ENCODE measurements at regions of chr11 and their contacts with region 1.

Region 1: DNA sequence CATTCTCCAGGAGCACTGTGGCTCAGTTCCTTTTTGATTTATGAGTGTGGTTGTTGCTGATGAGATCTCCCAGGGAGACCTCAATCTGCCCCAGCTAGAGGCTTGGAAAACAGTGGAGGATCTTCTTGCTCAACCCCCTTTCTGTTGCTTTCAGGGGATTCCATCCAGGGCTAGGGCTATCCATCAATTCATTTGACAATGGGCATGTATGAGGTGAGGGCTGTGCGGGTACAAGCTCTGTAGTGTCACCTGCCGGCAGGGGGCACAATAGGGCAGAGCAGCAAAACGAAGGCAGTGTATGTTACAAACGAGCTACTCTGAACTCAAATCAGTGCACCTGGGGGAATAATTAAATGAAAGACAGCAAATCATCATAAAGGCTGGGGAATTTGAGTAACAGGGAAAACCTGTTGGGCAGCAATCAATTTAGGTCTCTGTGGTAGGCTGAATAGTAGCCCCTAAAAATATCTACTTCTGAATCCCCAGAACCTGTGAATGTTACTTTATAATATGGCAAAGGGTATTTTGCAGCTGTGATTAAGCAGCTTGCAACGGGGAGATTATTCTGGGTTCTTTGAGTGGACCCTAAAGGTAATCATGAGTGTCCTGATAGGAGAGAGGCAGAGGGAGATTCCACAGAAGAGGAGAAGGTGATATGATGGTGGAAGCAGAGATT is 170.3 kb upstream of the ZBED5 start:
- DNase-seq: peak; percentile 60 to 76 (median 65)
- H3K4me3 ChIP-seq: no peak overlapping the region
- H3K4me3 Mint-ChIP-seq: no peak overlapping the region
- H3K27ac ChIP-seq: no peak overlapping the region
- H3K27ac Mint-ChIP-seq: no peak overlapping the region
- H3K4me1 ChIP-seq: no peaks in the 10 kb centered on the region
- H3K4me1 Mint-ChIP-seq: peaks cover 0 to 2% (median 0%) of the 10 kb centered on the region in 4 donors
- H3K27me3 ChIP-seq: no peaks in the 10 kb centered on the region
- H3K27me3 Mint-ChIP-seq: peaks cover 0 to 2% of the 10 kb centered on the region in 2 donors

Region 2: GRCh38 chr11:10502770-10503169 is 525.4 kb before region 1 on chr11:
- CTCF ChIA-PET with region 1: no interaction called
- POLR2A ChIA-PET with region 1: no interaction called
- intact Hi-C with region 1: no loop called
- DNase-seq: no peak
- H3K4me3 ChIP-seq: no peak overlapping the region
- H3K4me3 Mint-ChIP-seq: no peak overlapping the region
- H3K27ac ChIP-seq: no peak overlapping the region
- H3K27ac Mint-ChIP-seq: peak overlapping the region in 4 of 7 donors; percentile 5 to 79 (median 32)
- H3K4me1 ChIP-seq: no peaks in the 10 kb centered on the region
- H3K4me1 Mint-ChIP-seq: peaks cover 0 to 3% (median under 1%) of the 10 kb centered on the region in 4 donors
- H3K27me3 ChIP-seq: no peaks in the 10 kb centered on the region
- H3K27me3 Mint-ChIP-seq: no peaks in the 10 kb centered on the region

Region 3: GRCh38 chr11:10920205-10920604 is 108.0 kb before region 1 on chr11:
- CTCF ChIA-PET with region 1: interaction called, 10 read pairs
- POLR2A ChIA-PET with region 1: no interaction called
- intact Hi-C with region 1: no loop called
- DNase-seq: no peak
- H3K4me3 ChIP-seq: no peak overlapping the region
- H3K4me3 Mint-ChIP-seq: no peak overlapping the region
- H3K27ac ChIP-seq: no peak overlapping the region
- H3K27ac Mint-ChIP-seq: no peak overlapping the region
- H3K4me1 ChIP-seq: no peaks in the 10 kb centered on the region
- H3K4me1 Mint-ChIP-seq: no peaks in the 10 kb centered on the region
- H3K27me3 ChIP-seq: no peaks in the 10 kb centered on the region
- H3K27me3 Mint-ChIP-seq: peaks cover 0 to 4% of the 10 kb centered on the region in 2 donors

Region 4: GRCh38 chr11:11016068-11016467 is 12.1 kb before region 1 on chr11:
- CTCF ChIA-PET with region 1: interaction called, 27 read pairs
- POLR2A ChIA-PET with region 1: no interaction called
- intact Hi-C with region 1: no loop called
- DNase-seq: no peak
- H3K4me3 ChIP-seq: no peak overlapping the region
- H3K4me3 Mint-ChIP-seq: no peak overlapping the region
- H3K27ac ChIP-seq: no peak overlapping the region
- H3K27ac Mint-ChIP-seq: no peak overlapping the region
- H3K4me1 ChIP-seq: no peaks in the 10 kb centered on the region
- H3K4me1 Mint-ChIP-seq: no peaks in the 10 kb centered on the region
- H3K27me3 ChIP-seq: no peaks in the 10 kb centered on the region
- H3K27me3 Mint-ChIP-seq: peaks cover 2 to 7% of the 10 kb centered on the region in 2 donors

Region 5: DNA sequence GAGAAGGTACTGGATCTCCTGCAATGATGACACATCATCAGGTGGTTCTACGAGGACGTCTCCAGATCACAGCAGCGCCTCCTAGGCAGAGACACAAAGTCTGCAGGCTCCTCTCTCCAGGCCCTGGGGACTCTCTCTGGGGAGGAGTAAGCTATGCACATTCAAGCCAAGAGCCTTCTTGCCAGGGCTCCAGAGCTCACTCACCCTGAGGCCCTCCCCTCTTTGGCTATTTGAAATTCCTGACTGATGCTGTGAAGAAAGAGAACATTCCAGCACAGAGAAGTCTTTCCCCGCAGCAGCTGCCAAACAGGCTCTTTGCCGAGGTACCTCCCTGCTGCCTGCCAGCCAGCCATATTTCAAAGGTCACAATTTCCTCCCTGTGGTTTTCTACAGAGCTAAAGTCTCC is 120.0 kb after region 1 on chr11:
- CTCF ChIA-PET with region 1: interaction called, 339 read pairs
- POLR2A ChIA-PET with region 1: no interaction called
- intact Hi-C with region 1: no loop called
- DNase-seq: peak in 2 of 5 donors; percentile 24 to 58
- H3K4me3 ChIP-seq: no peak overlapping the region
- H3K4me3 Mint-ChIP-seq: peak overlapping the region in 5 of 8 donors; percentile 37 to 83 (median 44)
- H3K27ac ChIP-seq: no peak overlapping the region
- H3K27ac Mint-ChIP-seq: peak overlapping the region; percentile 31 to 98 (median 95)
- H3K4me1 ChIP-seq: peaks cover 48% of the 10 kb centered on the region
- H3K4me1 Mint-ChIP-seq: peaks cover 40 to 67% (median 47%) of the 10 kb centered on the region in 4 donors
- H3K27me3 ChIP-seq: no peaks in the 10 kb centered on the region
- H3K27me3 Mint-ChIP-seq: no peaks in the 10 kb centered on the region

Region 6: GRCh38 chr11:11787305-11788062 is 759.3 kb after region 1 on chr11:
- CTCF ChIA-PET with region 1: interaction called, 158 read pairs
- POLR2A ChIA-PET with region 1: interaction called, 5 read pairs
- intact Hi-C with region 1: loop called (anchors 1 kb)
- DNase-seq: peak; percentile 59 to 67 (median 61)
- H3K4me3 ChIP-seq: no peak overlapping the region
- H3K4me3 Mint-ChIP-seq: no peak overlapping the region
- H3K27ac ChIP-seq: no peak overlapping the region
- H3K27ac Mint-ChIP-seq: no peak overlapping the region
- H3K4me1 ChIP-seq: no peaks in the 10 kb centered on the region
- H3K4me1 Mint-ChIP-seq: peaks cover 0 to 1% (median 0%) of the 10 kb centered on the region in 4 donors
- H3K27me3 ChIP-seq: no peaks in the 10 kb centered on the region
- H3K27me3 Mint-ChIP-seq: peaks cover 0 to 7% of the 10 kb centered on the region in 2 donors

Region 7: GRCh38 chr11:12043959-12044819 is 1016.0 kb after region 1 on chr11:
- CTCF ChIA-PET with region 1: interaction called, 7 read pairs
- POLR2A ChIA-PET with region 1: no interaction called
- intact Hi-C with region 1: loop called (anchors 2 kb)
- DNase-seq: peak in 4 of 5 donors; percentile 49 to 60 (median 50)
- H3K4me3 ChIP-seq: no peak overlapping the region
- H3K4me3 Mint-ChIP-seq: no peak overlapping the region
- H3K27ac ChIP-seq: no peak overlapping the region
- H3K27ac Mint-ChIP-seq: no peak overlapping the region
- H3K4me1 ChIP-seq: no peaks in the 10 kb centered on the region
- H3K4me1 Mint-ChIP-seq: peaks cover 2 to 5% (median 3%) of the 10 kb centered on the region in 4 donors
- H3K27me3 ChIP-seq: no peaks in the 10 kb centered on the region
- H3K27me3 Mint-ChIP-seq: no peaks in the 10 kb centered on the region

Measured in CD4-positive, alpha-beta memory T cell (primary cell).